Activated CD8-positive, alpha-beta memory T cell treated with anti-CD3 and anti-CD28 coated beads, Interleukin-2, amount 10 ng/mL, durations not matched to agents 7 days and 5 days (primary cell): ENCODE measurements at regions of chr15 and their contacts with region 1.

Region 1: DNA sequence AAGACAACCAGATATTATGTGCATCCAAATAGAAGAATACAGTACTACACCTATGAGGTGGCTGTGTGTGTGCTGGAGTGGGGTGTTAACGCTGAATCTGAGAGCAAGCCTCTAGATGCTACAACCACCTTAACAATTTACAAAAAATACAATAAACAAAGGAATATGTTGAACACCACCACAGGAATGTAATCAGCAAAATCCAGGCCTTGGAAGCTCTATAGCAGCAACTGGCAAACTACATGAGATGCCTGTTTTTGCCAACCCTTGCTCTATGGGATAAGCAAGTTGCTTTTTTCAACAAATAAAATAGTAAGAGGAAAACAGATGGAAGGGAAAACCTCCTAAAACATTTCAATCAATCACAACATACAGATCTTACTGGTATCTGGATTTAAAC is 23.9 kb downstream of the SLTM start:
- DNase-seq: no peak
- ATAC-seq: no peak
- H3K4me3 Mint-ChIP-seq: no peak overlapping the region
- H3K27ac Mint-ChIP-seq: no peak overlapping the region
- H3K4me1 Mint-ChIP-seq: peaks cover 52% of the 10 kb centered on the region
- H3K27me3 Mint-ChIP-seq: no peaks in the 10 kb centered on the region

Region 2: GRCh38 chr15:58932710-58933280 is 23.2 kb after region 1 on chr15:
- CTCF ChIA-PET with region 1: interaction called, 10 read pairs
- DNase-seq: no peak
- ATAC-seq: no peak
- H3K4me3 Mint-ChIP-seq: peak overlapping the region; percentile 99
- H3K27ac Mint-ChIP-seq: peak overlapping the region; percentile 95
- H3K4me1 Mint-ChIP-seq: peaks cover 28% of the 10 kb centered on the region
- H3K27me3 Mint-ChIP-seq: no peaks in the 10 kb centered on the region

Region 3: DNA sequence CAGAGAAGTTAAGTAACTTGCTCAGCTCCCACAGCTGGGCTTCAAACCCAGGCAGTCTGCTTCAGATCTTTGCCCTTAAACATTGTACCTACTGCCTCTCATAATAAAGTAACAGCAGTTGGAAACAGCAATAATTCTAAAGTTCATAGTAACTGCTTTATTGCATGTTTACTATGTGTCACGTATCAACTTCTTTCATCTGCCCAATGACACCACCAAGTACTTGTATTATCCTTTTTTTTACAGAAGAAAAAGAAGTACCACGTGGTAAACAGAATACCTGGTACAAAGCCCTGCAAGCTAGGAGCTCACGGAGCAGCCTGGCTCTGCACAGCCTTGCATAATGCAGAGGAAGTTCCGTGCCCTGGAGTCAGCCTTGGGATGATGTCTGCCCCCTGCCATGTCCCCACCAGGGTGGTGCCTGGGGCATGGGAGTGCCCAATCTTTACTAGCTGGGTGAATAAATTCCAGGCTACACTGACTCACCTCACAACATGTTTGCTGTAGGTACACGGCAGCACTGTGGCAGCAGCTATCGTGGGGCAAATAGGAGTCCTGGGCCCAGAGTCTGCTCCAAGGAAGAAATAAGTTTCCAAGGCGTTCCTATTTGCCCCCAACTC is 374.2 kb after region 1 on chr15:
- CTCF ChIA-PET with region 1: no interaction called
- DNase-seq: no peak
- ATAC-seq: no peak
- H3K4me3 Mint-ChIP-seq: no peak overlapping the region
- H3K27ac Mint-ChIP-seq: no peak overlapping the region
- H3K4me1 Mint-ChIP-seq: peaks cover 20% of the 10 kb centered on the region
- H3K27me3 Mint-ChIP-seq: peaks cover 11% of the 10 kb centered on the region